PC-9 (cell line): ENCODE measurements at regions of chr12 and their contacts with region 1.

Region 1: GRCh38 chr12:102702447-102703114 is 214.5 kb downstream of the PAH start:
- DNase-seq: peak; percentile 39 to 45
- H3K4me3 ChIP-seq: no peak overlapping the region
- H3K27ac ChIP-seq: no peak overlapping the region
- H3K4me1 ChIP-seq: no peaks in the 10 kb centered on the region
- H3K27me3 ChIP-seq: no peaks in the 10 kb centered on the region
- CTCF ChIP-seq: peak; percentile 85

Region 2: DNA sequence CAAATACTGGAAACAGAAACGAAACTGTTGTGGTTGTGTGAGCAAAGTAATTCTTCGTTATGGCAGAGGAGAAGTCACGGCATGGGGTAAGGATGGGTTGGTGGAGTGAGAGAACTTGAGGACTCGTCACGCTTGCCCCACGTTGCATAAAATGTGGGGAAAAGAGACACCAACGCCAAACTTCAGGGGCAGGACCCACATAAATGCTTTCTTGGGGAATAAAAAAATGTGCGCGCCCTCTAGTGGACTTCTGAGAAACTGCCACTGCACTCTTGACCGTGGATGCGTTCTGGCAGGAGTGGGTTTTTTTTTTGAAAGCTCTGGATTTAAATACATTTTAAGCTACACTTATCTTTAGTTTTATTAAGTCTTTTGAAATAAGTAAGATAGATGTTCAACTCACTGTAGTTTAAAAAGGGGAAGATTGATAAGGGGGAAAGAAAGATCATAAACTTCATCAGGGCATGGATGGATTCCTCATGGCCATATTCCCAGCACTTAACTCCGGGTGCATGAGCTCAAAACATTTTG is 218.1 kb before region 1 on chr12:
- CTCF ChIA-PET with region 1: no interaction called
- POLR2A ChIA-PET with region 1: no interaction called
- intact Hi-C with region 1: loop called (anchors 5 kb)
- DNase-seq: peak in 1 of 2 experiments; percentile 21
- H3K4me3 ChIP-seq: no peak overlapping the region
- H3K27ac ChIP-seq: no peak overlapping the region
- H3K4me1 ChIP-seq: 0 out of 2 replicates have a peak, but pooled peaks cover 4% of the 10 kb centered on the region
- H3K27me3 ChIP-seq: no peaks in the 10 kb centered on the region
- CTCF ChIP-seq: peak; percentile 95